Tibial artery (tissue), 4 donors: ENCODE measurements at regions of chr11 and their contacts with region 1.

Region 1: GRCh38 chr11:73288873-73289707 is 17.0 kb downstream of the P2RY6 start:
- DNase-seq: peak; percentile 68 to 86
- H3K4me3 ChIP-seq: peak overlapping the region; percentile 25 to 37
- H3K27ac ChIP-seq: peak overlapping the region; percentile 72 to 80
- H3K4me1 ChIP-seq: peaks cover 0 to 21% (median 16%) of the 10 kb centered on the region in 4 donors
- H3K27me3 ChIP-seq: no peaks in the 10 kb centered on the region
- CTCF ChIP-seq: peak; percentile 96 to 97

Region 2: DNA sequence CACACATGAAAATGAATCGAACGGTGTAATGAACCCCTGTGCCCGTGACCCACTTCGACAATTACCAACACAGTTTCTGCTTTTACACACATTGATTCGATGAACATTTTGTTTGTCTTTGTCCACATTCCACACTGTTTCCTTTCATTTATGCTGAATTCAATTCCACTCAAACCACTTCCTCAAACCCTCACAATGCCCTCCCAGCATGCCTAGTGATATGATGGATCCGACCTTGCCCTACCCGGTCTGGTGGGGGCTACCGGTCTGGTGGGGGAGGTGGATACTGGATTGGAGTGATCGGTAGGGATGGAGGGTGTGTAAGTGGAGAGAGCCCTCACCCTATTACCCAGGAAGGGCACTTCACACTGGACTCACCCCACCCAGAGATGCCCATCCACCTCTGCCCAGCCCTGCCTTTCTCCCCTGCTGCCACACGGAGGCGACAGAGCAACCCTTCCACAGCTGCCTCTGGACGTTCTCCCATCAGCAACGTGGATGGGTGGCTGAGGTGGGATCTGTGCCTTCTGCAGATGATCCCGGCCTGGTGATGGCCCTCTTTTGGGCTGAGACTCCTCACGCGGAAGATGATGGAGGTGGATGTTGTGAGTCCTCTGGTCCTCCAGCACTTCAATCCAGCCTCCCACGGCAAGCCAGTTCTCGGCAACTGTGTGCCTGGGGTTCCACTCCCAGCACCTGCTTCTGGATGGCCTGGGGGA is 104.0 kb before region 1 on chr11:
- intact Hi-C with region 1: loop called (anchors 5 kb)
- DNase-seq: peak; percentile 57 to 86
- H3K4me3 ChIP-seq: no peak overlapping the region
- H3K27ac ChIP-seq: peak overlapping the region; percentile 76 to 77
- H3K4me1 ChIP-seq: peaks cover 0 to 38% (median 30%) of the 10 kb centered on the region in 4 donors
- H3K27me3 ChIP-seq: no peaks in the 10 kb centered on the region
- CTCF ChIP-seq: peak; percentile 78 to 80